HepG2 (cell line): ENCODE measurements at regions of chr13 and their contacts with region 1.

Region 1: DNA sequence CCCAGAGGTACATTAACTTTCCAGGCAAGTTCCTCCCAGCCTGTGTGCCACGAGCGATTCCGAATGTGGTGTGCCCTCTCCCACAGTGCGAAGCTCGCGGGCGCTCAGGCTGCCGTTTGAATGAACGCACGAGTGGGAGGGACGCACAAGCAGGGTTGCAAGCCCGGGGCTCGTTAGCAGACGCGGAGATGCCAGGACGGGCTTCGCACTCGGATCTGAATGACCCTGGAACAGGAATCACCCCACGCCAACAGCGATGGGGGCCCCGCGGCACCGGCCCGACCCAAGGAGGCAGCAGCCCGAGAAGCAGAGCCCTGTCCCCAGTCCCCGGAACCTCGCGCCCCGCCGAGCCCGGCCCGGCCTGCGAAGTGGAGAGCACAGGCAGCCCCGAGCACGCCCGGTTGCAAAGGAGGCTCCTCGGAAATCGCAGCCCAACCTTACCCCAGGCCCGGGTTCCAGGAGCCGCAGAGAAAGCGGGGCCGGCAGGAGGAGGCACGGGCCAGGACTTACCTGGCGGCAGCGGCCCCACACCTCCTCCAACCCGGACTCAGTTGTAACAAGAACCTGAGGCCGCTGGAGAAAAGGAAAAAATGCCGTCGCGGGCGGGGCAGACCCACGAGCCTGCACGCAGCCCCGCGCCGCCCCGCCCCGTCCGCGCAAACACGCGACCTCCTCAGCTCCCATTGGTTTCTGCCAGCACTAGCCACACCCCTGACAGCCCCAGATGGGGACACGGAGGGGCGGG is at the start of gene SLC25A30:
- DNase-seq: peak; percentile 90
- ATAC-seq: peak; percentile 95
- H3K4me3 ChIP-seq: peak within 1 kb of the TSS; percentile 82 to 90 (median 85)
- H3K27ac ChIP-seq: peak within 1 kb of the TSS; percentile 81
- H3K4me1 ChIP-seq: peaks cover 49% of the 10 kb centered on the region
- H3K27me3 ChIP-seq: no peaks in the 10 kb centered on the region; a peak in 1 of 5 replicates
- CTCF ChIP-seq: 0 out of 2 replicates have a peak, but pooled peaks have one; percentile 13
- EP300 ChIP-seq: no peak
- POLR2A ChIP-seq: peak; percentile 65 to 91; a peak in 3 of 4 replicates
- RAD21 ChIP-seq: no peak; the same call in 1 of the 2 replicates
- total RNA-seq, gene SLC25A30: 22.5 and 51.1 TPM in 2 replicates

Region 2: DNA sequence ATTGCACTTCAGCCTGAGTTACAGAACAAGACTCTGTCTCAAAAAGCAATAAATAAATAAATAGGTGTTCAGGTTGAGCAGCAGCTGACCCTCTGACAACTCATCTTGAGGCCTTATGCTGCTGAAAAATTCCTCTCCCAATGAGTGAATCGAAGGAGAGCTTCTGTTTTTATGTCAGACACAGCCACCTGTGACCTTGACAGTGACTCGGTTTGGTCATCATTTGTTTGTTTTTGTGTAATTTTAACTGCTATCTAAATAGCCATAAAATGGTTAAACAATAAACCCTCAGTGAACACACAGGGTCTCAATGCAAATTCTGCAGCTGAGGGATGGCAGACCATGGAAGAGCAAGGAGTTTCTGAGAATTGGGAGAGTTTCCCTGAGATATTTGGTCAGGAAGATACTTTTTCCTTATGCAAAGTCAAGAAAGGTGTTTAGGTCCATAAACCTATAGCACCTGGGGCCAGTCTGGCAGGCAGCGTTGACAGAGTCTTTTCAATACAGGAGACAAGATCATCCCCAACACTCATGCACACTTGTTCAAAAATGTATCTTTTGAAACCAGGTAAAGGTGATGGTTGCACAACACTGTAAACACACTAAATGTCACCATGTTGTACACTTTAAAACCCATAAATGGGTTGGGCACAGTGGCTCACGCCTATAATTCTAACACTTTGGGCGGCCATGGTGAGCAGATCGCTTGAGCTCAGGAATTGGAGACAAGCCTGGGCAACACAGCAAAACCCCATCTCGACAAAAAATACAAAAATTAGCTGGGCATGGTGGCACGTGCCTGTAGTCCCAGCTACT is 16.8 kb after region 1 on chr13:
- CTCF ChIA-PET with region 1: no interaction called
- POLR2A ChIA-PET with region 1: interaction called, 43 read pairs
- in situ Hi-C with region 1: no loop called
- intact Hi-C with region 1: loop called (anchors 1 kb)
- DNase-seq: peak; percentile 89
- ATAC-seq: peak; percentile 71
- H3K4me3 ChIP-seq: peak overlapping the region; percentile 17 to 41 (median 20); a peak in 4 of 6 replicates
- H3K27ac ChIP-seq: peak overlapping the region; percentile 64
- H3K4me1 ChIP-seq: peaks cover 69% of the 10 kb centered on the region
- H3K27me3 ChIP-seq: no peaks in the 10 kb centered on the region
- CTCF ChIP-seq: no peak
- EP300 ChIP-seq: peak in 1 of 2 experiments; percentile 72; a peak in 2 of 4 replicates
- POLR2A ChIP-seq: peak; percentile 54 to 80; a peak in 3 of 4 replicates
- RAD21 ChIP-seq: no peak

Region 3: DNA sequence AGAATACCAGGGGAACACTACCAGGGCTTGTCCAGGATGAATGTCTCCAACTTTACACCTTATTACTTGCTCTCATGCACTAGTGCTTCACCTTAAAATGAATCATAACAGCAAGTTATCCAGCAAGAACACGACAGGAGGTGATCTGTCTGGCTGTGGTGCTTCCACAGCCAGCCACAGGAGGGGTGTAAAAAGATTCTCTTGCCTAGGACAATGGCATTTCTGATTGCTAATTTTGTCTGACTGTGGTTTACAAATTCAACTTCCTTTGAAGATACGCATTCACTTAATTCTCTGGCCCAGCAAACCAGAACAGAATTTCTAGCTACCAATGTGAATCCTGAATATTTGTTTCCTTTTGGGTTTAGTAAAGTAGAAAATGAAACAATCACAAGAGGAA is 23.7 kb after region 1 on chr13:
- CTCF ChIA-PET with region 1: no interaction called
- POLR2A ChIA-PET with region 1: interaction called, 20 read pairs
- in situ Hi-C with region 1: no loop called
- intact Hi-C with region 1: loop called (anchors 1 kb)
- DNase-seq: peak; percentile 70
- ATAC-seq: peak; percentile 70
- H3K4me3 ChIP-seq: peak overlapping the region in 2 of 3 experiments; percentile 17 to 58; a peak in 3 of 6 replicates
- H3K27ac ChIP-seq: peak overlapping the region; percentile 86
- H3K4me1 ChIP-seq: peaks cover 92% of the 10 kb centered on the region
- H3K27me3 ChIP-seq: no peaks in the 10 kb centered on the region
- CTCF ChIP-seq: peak; percentile 60
- EP300 ChIP-seq: no peak
- POLR2A ChIP-seq: no peak
- RAD21 ChIP-seq: peak; percentile 54; the same call in 1 of the 2 replicates

Region 4: DNA sequence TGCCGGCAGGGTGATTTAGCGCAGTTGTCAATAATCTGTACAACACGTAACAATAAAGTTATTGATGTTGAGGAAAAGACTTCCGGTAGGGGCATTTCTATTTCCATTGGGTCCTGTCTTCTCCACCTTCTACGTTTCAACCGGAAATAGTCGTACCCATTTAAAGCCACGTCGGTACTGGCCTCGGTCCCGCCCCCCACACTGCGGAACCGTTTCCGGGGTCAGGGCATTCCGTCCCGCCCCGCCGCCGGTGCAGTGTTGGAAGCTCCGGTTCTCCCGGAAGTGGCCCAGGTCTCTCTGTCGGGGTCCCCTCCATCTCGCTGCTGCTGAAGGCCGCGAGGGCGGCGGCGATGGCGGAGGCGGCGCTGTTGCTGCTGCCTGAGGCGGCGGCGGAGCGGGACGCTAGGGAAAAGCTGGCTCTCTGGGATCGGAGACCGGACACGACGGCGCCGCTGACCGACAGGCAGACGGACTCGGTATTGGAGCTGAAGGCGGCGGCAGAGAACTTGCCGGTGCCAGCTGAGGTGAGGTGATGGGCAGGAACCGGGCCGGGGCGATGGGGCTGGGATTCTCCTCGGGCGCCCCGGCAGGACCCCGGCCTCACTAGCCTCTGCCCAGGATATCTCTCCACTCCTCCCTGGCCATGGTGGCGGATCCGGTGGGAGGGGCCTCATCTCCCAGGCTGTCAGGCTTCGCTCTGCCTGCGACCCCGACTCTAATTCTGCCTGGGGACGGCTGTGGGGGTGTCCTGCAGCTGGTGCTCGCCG is 46.9 kb after region 1 on chr13 and contains the start of gene COG3:
- CTCF ChIA-PET with region 1: interaction called, 5 read pairs
- POLR2A ChIA-PET with region 1: interaction called, 18 read pairs
- in situ Hi-C with region 1: loop called (anchors 5 kb)
- intact Hi-C with region 1: loop called (anchors 1 kb)
- DNase-seq: peak; percentile 99
- ATAC-seq: peak; percentile 95
- H3K4me3 ChIP-seq: peak within 1 kb of the TSS; percentile 76 to 96 (median 91)
- H3K27ac ChIP-seq: peak within 1 kb of the TSS; percentile 89
- H3K4me1 ChIP-seq: peaks cover 42% of the 10 kb centered on the region
- H3K27me3 ChIP-seq: no peaks in the 10 kb centered on the region; a peak in 1 of 5 replicates
- CTCF ChIP-seq: peak; percentile 47; the same call in 1 of the 2 replicates
- EP300 ChIP-seq: peak; percentile 20 to 34; a peak in 1 of 4 replicates
- POLR2A ChIP-seq: peak; percentile 71 to 75
- RAD21 ChIP-seq: no peak; the same call in 1 of the 2 replicates
- total RNA-seq, gene COG3: 47.5 and 47.8 TPM in 2 replicates

Region 5: GRCh38 chr13:45473627-45474026 is 55.7 kb after region 1 on chr13:
- CTCF ChIA-PET with region 1: no interaction called
- POLR2A ChIA-PET with region 1: interaction called, 6 read pairs
- in situ Hi-C with region 1: loop called (anchors 5 kb)
- intact Hi-C with region 1: loop called (anchors 2 kb)
- DNase-seq: peak; percentile 43
- ATAC-seq: peak; percentile 96
- H3K4me3 ChIP-seq: no peak overlapping the region
- H3K27ac ChIP-seq: no peak overlapping the region
- H3K4me1 ChIP-seq: peaks cover 56% of the 10 kb centered on the region
- H3K27me3 ChIP-seq: no peaks in the 10 kb centered on the region
- CTCF ChIP-seq: peak; percentile 54
- EP300 ChIP-seq: no peak
- POLR2A ChIP-seq: no peak
- RAD21 ChIP-seq: peak; percentile 48; the same call in 1 of the 2 replicates

Region 6: DNA sequence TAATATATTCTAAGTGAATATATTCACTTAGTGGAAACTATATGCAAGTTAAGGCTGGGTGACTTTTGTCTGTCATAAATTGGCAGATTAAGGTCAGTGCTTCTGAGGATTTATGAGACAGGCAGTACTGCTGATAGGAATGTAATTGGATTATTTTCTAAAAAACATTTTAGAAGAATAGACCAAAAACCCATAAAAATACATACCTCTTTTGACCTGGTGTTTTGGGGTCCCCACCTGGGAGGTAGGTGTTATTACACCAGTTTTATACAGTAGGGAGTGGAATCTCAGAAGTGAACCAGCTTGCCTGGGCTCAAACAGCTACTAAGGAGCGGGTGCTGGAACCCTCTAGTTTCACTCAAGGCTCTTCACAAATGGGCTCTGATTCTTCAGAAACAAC is 72.1 kb after region 1 on chr13:
- CTCF ChIA-PET with region 1: no interaction called
- POLR2A ChIA-PET with region 1: interaction called, 5 read pairs
- in situ Hi-C with region 1: no loop called
- intact Hi-C with region 1: loop called (anchors 5 kb)
- DNase-seq: peak; percentile 25
- ATAC-seq: peak; percentile 85
- H3K4me3 ChIP-seq: no peak overlapping the region
- H3K27ac ChIP-seq: no peak overlapping the region
- H3K4me1 ChIP-seq: no peaks in the 10 kb centered on the region
- H3K27me3 ChIP-seq: no peaks in the 10 kb centered on the region; a peak in 1 of 5 replicates
- CTCF ChIP-seq: peak; percentile 55
- EP300 ChIP-seq: no peak
- POLR2A ChIP-seq: no peak
- RAD21 ChIP-seq: peak; percentile 49